ENCODE measurements at regions of chr10 and their contacts with region 1.

Region 1: GRCh38 chr10:103870516-103870915 is 15.1 kb upstream of the SH3PXD2A start:
- DNase-seq: peak; percentile 95
- H3K4me3 ChIP-seq: peak overlapping the region in 2 of 3 experiments; percentile 4 to 21
- H3K27ac ChIP-seq: peak overlapping the region; percentile 99
- H3K4me1 ChIP-seq: peaks cover 45% of the 10 kb centered on the region
- H3K27me3 ChIP-seq: no peaks in the 10 kb centered on the region
- CTCF ChIP-seq: peak; percentile 19 to 38

Region 2: GRCh38 chr10:103528556-103528955 is 342.0 kb before region 1 on chr10:
- CTCF ChIA-PET with region 1: no interaction called
- dilution Hi-C with region 1: no loop called
- in situ Hi-C with region 1: no loop called
- intact Hi-C with region 1: loop called (anchors 5 kb)
- DNase-seq: no peak
- H3K4me3 ChIP-seq: no peak overlapping the region
- H3K27ac ChIP-seq: peak overlapping the region; percentile 94
- H3K4me1 ChIP-seq: peaks cover 16% of the 10 kb centered on the region
- H3K27me3 ChIP-seq: no peaks in the 10 kb centered on the region
- CTCF ChIP-seq: no peak

Region 3: DNA sequence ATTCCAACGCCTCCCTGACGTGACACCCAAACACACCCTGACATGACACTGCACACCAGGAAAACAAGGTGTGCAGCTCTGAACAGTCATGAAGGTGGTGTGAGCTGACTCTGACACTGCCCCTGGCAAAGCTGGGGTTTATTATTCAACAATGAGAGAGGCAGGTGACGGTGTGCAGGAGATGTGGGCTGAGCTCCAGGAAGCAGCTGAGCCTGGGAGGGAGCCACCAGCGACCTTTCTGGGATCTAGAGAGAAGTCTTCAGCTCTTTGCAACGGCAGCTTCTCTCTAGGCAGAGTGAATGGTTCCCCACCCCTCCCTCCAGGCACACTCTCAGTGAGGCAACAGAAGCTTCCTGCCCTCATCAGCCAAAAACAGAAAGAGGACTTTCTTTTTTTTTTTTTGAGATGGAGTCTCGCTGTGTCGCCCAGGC is 80.7 kb before region 1 on chr10:
- CTCF ChIA-PET with region 1: no interaction called
- dilution Hi-C with region 1: loop called (anchors 5 kb)
- in situ Hi-C with region 1: no loop called
- intact Hi-C with region 1: no loop called
- DNase-seq: peak; percentile 65
- H3K4me3 ChIP-seq: no peak overlapping the region
- H3K27ac ChIP-seq: peak overlapping the region; percentile 68
- H3K4me1 ChIP-seq: peaks cover 68% of the 10 kb centered on the region
- H3K27me3 ChIP-seq: no peaks in the 10 kb centered on the region
- CTCF ChIP-seq: no peak

Region 4: DNA sequence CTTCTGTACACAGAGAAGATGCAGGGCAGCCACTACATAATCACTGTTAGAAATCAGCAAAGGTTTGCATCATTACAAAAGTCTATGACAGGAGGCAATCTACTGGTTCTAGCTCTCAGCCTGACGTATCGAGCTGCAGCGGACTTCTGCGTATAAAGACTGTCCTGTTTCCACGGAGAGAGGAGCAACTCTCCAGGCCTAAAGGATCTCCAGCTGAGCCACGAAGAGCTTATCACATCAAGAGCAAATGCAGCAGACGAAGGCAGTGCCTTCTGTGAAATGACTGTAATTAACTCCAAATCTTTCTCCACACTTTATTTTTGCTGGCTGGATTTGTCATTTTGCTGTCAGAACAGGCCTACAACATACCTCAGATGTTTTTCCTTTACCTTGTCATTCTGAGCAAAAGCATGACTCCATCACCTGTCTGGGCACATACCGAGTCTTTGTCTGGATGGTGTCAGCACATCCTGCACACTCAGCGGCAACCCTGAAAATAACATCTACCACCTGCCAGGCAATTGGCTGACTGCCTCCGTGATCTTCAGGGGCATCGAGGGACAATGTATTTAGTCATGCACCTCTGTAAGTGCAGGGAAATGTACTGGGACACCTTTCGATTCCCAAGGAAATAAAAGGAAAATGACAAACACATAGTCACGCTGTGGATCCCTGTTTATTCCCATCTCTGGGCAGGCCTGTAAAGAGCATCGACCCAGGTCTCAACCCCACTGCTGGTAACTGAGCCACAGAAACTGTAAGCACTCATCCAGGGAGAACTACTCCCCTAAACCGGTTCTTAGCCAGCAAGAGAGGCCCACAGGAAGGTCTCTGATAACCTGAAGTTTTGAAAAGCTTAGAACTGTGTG is 11.1 kb after region 1 on chr10:
- CTCF ChIA-PET with region 1: interaction called, 5 read pairs
- dilution Hi-C with region 1: no loop called
- in situ Hi-C with region 1: no loop called
- intact Hi-C with region 1: loop called (anchors 1 kb)
- DNase-seq: peak; percentile 99
- H3K4me3 ChIP-seq: no peak overlapping the region
- H3K27ac ChIP-seq: peak overlapping the region; percentile 98
- H3K4me1 ChIP-seq: peaks cover 63% of the 10 kb centered on the region
- H3K27me3 ChIP-seq: no peaks in the 10 kb centered on the region
- CTCF ChIP-seq: peak in 1 of 2 donors; percentile 12